A673 (cell line): ENCODE measurements at regions of chr11 and their contacts with region 1.

Region 1: GRCh38 chr11:118907051-118908042 is 18.4 kb downstream of the BCL9L start:
- DNase-seq: peak; percentile 85
- H3K4me3 ChIP-seq: peak overlapping the region; percentile 20
- H3K27ac ChIP-seq: peak overlapping the region; percentile 73
- H3K4me1 ChIP-seq: peaks cover 49% of the 10 kb centered on the region
- H3K27me3 ChIP-seq: no peaks in the 10 kb centered on the region
- CTCF ChIP-seq: peak; percentile 97

Region 2: DNA sequence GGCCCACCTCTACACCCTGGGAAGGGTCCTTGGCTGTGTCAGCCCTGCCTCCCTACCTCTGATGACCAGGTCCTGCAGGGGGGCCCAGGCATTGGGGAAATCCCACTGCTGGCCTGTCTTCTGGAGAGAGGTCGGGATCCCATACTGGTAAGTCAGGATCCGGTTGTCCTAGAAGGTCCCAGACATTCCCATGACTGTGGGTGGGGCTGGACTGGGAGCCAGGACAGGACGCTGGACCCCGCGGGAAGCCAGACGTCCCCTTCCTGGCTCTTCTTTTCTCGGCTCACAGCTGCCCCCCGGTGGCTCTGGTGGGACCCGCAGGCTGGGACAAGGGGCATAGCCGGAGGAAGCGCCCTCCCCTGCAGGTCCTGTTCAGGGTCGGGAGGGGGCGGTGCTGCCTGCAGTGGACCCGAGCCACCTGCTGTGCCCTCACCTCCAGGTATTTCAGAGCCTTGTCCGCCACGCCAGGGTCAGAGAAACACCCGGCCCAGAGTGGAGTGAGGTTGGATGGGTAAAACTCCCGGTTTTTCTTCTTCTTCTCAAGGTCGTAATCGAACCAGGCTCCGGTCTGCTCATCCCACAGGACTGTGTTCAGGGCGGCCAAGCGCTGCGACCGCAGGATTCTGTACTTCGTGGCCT is 247.9 kb before region 1 on chr11:
- CTCF ChIA-PET with region 1: interaction called, 15 read pairs
- POLR2A ChIA-PET with region 1: no interaction called
- intact Hi-C with region 1: no loop called
- DNase-seq: peak; percentile 95
- H3K4me3 ChIP-seq: no peak overlapping the region
- H3K27ac ChIP-seq: no peak overlapping the region
- H3K4me1 ChIP-seq: no peaks in the 10 kb centered on the region
- H3K27me3 ChIP-seq: no peaks in the 10 kb centered on the region
- CTCF ChIP-seq: peak; percentile 100

Region 3: DNA sequence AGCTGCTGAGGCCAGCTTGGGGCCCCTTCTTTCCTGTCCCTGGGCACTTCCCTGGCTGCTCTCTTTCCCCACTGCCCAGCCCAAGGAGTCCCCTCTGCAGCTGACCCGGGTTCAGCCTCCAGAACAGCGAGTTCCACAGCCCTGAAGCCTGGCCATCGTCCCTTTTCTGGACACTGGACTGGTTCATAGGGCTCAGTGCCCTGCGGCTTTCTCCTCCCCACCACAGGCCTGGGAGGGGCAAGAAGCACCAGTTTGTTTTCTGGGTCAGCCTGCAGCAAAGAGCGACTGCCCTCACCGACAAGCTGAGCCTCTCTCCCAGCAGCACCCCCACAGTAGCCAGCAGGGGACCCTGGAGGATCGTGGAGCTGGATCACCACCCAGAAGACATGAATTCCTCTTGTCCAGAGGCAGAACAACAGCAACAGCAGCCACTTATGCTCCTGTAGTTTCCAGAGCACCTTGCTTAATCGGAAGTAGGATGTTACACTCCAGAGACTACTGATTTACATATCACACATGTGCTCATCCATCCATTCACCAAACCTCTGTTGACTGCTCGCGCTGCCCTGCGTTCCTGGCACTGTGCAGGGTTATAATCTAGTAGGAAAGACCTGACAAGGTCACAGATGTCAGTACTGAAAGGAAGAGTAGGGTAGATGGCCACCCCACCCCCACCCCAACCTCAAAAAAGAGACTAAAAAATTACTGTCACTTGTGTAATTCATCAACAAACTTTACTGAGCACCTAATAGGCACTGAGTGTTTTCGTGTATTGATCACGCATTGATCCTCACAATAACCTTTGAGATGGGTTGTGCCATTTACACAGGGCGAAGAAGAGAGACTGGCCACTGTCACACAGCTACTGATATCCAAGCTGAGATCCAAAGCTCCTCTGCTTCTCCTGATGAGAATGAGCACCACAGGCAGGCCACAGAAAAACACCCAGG is 36.7 kb before region 1 on chr11:
- CTCF ChIA-PET with region 1: interaction called, 13 read pairs
- POLR2A ChIA-PET with region 1: no interaction called
- intact Hi-C with region 1: no loop called
- DNase-seq: no peak
- H3K4me3 ChIP-seq: no peak overlapping the region
- H3K27ac ChIP-seq: no peak overlapping the region
- H3K4me1 ChIP-seq: no peaks in the 10 kb centered on the region
- H3K27me3 ChIP-seq: no peaks in the 10 kb centered on the region
- CTCF ChIP-seq: no peak

Region 4: DNA sequence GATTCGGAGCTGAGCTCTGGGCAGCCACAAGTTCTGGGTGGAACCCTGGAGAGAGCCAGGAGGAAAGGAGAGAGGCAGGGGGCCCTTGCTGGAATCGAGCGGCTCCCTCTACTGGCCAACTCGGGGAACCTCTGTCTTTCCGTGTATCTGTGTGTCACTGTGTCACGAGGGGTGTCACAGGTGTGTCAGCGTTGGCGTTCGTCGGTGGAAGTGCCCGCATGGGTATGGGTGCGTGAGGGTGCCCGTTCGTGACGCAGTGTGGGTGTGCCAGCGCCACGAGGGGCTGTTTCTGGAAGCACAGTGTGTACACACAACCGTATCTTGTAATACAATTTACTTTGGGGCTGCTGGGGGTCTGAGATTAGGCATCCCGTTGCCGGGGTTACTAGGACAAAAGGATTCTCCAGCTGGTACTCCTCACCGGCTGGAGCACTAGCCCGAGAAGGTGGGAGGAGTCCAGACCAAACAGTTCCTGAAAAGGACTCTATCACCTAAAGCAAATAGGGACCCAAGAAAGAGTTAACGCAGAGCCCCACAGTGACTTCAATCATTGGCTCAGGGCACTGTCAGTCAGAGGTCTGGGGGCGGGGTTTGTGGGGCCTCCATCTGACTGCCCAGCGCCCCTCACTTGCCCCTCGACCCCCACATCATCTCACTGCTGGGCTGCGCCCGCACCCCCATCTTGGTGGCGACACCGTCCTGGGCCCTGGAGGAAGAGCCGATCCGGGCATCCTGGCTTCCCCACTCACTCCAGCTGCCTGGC is 20.9 kb after region 1 on chr11:
- CTCF ChIA-PET with region 1: interaction called, 49 read pairs
- POLR2A ChIA-PET with region 1: interaction called, 12 read pairs
- intact Hi-C with region 1: loop called (anchors 1 kb)
- DNase-seq: peak; percentile 97
- H3K4me3 ChIP-seq: peak overlapping the region; percentile 70
- H3K27ac ChIP-seq: peak overlapping the region; percentile 60
- H3K4me1 ChIP-seq: peaks cover 33% of the 10 kb centered on the region
- H3K27me3 ChIP-seq: no peaks in the 10 kb centered on the region
- CTCF ChIP-seq: peak; percentile 99

Region 5: DNA sequence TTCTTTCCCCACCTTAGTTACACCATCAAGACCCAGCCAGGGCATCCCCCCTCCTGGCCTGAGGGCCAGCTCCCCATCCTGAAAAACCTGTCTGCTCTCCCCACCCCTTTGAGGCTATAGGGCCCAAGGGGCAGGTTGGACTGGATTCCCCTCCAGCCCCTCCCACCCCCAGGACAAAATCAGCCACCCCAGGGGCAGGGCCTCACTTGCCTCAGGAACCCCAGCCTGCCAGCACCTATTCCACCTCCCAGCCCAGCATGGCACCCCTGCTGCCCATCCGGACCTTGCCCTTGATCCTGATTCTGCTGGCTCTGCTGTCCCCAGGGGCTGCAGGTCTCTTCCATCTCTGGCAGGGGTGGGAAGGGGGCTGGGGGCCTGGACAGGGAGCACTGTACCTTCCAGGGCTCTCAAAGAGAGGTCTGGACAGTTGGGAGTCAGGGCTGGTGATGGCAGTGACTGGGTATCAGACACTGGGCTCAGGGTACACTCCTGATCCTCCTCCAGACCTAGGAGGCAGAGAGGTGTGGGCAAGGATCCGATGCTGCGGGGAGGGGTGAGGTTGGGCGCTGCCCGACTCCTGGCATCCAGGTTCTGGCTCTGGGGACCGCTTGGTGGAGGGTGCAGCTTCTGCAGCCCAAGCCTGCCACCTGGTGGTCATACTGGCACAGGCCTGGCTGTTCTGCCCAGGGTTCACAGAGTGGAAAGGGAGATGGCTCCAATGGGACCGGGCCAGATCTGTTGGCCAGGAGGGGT is 48.9 kb after region 1 on chr11 and contains the start of gene UPK2:
- CTCF ChIA-PET with region 1: interaction called, 3 read pairs
- POLR2A ChIA-PET with region 1: no interaction called
- intact Hi-C with region 1: loop called (anchors 1 kb)
- DNase-seq: peak; percentile 88
- H3K4me3 ChIP-seq: no peak within 1 kb of the TSS
- H3K27ac ChIP-seq: no peak within 1 kb of the TSS
- H3K4me1 ChIP-seq: no peaks in the 10 kb centered on the region
- H3K27me3 ChIP-seq: no peaks in the 10 kb centered on the region
- CTCF ChIP-seq: peak; percentile 99
- total RNA-seq, gene UPK2: not detected in 2 replicates

Region 6: DNA sequence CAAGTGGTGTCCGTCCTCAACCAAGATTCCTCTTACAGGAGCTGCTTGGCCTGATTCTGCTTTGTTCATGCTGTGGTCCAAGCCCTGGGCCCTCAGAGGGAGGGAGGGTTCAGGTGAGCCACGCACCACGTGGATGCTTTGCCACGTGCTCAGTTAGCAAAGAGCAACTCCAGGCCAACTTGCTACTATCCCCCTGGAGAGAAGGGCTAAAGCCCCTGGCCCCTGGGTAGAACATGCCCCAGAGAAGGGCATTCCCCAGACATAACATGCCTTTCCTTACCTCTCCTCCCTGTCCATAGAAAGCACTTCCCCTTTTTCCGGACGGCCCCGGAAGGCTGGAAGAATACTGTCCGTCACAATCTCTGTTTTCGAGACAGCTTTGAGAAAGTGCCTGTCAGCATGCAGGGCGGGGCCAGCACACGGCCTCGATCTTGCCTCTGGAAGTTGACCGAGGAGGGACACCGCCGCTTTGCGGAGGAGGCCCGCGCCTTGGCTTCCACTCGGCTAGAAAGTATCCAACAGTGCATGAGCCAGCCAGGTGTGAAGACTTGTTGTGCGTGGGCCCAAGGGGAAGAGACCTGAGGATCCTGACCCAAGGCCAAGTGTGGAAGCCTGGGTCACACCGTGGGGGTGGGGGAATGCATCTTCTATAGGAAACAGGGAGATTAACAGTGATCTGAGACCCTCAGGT is 73.0 kb after region 1 on chr11:
- CTCF ChIA-PET with region 1: no interaction called
- POLR2A ChIA-PET with region 1: no interaction called
- intact Hi-C with region 1: no loop called
- DNase-seq: no peak
- H3K4me3 ChIP-seq: no peak overlapping the region
- H3K27ac ChIP-seq: no peak overlapping the region
- H3K4me1 ChIP-seq: peaks cover 7% of the 10 kb centered on the region
- H3K27me3 ChIP-seq: no peaks in the 10 kb centered on the region
- CTCF ChIP-seq: no peak

Region 7: DNA sequence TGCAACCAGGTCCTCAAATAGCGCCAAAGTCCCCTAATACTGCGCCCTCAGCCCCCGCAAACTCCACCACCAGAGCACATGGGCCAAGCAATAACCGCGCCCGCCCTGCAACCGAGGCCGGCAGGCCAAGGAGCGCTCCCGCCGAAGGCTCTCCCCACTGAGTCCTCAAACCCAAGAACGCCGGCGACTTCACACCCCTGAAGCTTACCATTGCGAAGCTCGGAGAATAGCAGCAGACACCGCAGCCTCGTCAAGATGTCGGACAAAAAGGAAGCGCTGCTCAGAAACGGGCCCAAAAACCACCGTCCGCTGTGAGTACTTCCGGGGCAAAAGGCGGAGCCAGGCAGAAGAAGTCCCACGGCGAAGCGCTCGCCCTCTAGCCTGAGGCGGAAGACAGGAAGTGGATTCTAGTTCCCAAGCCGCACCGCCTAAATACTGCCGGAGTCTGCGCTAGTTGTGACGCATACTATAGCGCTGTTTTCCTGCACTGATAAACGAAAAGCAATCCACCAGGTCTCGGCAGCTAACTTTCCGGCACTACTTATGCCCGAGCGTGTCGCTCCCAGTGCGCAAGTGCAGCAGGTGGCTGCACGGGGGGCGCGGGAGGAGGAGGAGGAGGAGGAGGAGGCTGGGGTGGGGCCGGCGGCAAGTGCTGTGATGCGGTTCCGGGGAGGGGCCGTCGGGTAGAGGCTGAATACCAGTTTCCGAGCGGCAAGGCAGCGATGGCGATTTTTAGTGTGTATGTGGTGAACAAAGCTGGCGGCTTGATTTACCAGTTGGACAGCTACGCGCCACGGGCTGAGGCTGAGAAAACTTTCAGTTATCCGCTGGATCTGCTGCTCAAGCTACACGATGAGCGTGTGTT is 111.0 kb after region 1 on chr11 and contains the starts of genes RPS25 and TRAPPC4:
- CTCF ChIA-PET with region 1: no interaction called
- POLR2A ChIA-PET with region 1: no interaction called
- intact Hi-C with region 1: no loop called
- DNase-seq: peak; percentile 99
- H3K4me3 ChIP-seq: peak within 1 kb of the TSS; percentile 77
- H3K27ac ChIP-seq: peak within 1 kb of the TSS; percentile 95
- H3K4me1 ChIP-seq: peaks cover 18% of the 10 kb centered on the region
- H3K27me3 ChIP-seq: no peaks in the 10 kb centered on the region
- CTCF ChIP-seq: no peak
- total RNA-seq, gene RPS25: 1,091 and 1,176 TPM in 2 replicates
- total RNA-seq, gene TRAPPC4: 73.0 and 81.2 TPM in 2 replicates